AG04449 (cell line): ENCODE measurements at regions of chr9 and their contacts with region 1.

Region 1: DNA sequence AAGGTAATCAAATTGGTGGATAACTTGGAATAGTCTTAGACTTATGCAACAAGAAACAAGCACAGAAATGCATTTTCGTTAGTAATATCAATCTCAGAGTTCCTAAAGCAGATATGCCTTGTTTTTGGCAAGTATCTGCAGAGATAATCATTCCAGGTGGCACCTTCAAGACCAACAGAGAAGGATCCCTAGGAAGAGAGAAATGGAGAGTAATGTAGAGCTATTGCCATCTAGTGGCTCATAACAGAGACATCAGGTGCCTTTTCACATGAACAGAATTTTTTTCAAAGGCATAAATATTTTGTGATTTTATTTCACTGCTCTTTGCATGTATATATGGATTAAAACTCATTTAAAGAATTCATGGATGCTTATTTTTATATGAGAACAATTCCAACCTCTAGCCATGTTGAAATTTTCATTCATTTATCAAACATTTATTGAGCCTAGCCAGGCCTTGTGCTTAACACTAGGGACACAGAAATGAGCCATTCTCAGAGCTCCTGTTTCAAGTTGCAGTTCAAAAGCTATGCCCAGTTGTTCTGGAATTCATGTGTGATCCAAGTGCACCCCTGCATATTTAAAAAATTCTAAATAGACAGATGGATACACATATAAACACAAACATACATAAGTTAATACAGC is 117.5 kb upstream of the OR13F1 start:
- DNase-seq: peak; percentile 16
- H3K4me3 ChIP-seq: no peak overlapping the region
- CTCF ChIP-seq: peak; percentile 47

Region 2: DNA sequence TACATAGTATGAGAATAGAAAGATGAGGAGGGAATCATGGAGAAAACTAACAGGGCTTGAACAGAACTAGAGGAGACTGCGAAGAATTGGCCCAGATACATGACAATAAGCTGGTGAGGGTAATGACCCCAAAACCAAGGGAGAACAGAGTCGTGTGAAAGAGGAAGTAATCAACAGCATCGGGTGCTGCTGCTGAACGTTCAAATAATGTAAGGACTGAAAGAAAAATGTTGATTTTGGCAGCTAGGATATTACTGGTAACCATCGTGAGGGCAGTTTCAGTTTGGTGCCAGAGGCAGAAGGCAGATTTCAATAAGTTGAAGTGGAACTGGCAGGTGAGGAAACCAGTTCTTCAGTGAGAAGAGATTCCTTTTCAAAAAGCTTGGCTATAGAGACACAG is 359.3 kb before region 1 on chr9:
- CTCF ChIA-PET with region 1: interaction called, 14 read pairs
- POLR2A ChIA-PET with region 1: no interaction called
- DNase-seq: no peak
- H3K4me3 ChIP-seq: no peak overlapping the region
- CTCF ChIP-seq: no peak

Region 3: GRCh38 chr9:104247899-104248460 is 138.6 kb before region 1 on chr9:
- CTCF ChIA-PET with region 1: no interaction called
- POLR2A ChIA-PET with region 1: no interaction called
- DNase-seq: no peak
- H3K4me3 ChIP-seq: no peak overlapping the region
- CTCF ChIP-seq: no peak